OCI-LY7 (cell line): ENCODE measurements at regions of chr10 and their contacts with region 1.

Region 1: DNA sequence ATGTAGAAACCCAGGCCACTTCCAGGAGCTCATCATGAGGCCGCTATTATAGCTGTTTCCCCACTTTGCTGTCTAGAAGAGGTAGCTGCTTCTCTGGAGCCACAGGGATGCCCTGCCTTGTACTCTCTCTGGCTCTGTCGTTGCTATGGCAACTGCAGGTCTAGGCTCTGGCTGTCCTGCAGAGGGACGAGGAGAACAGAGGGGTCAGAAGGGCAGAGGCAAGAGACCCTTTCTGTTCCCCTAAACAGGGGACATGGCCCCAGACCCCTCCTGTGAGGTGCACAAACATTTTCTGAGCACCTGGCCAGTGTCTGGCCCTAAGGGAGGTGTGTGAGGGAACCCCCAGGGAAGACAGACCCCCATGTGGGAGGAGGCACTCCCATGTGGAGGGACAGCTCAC is 31.4 kb downstream of the ITPRIP start:
- DNase-seq: no peak
- H3K4me3 ChIP-seq: no peak overlapping the region
- H3K27ac ChIP-seq: no peak overlapping the region
- H3K4me1 ChIP-seq: peaks cover 6% of the 10 kb centered on the region
- CTCF ChIP-seq: no peak

Region 2: GRCh38 chr10:103918053-103918846 is 388.6 kb before region 1 on chr10 and contains the start of gene STN1:
- CTCF ChIA-PET with region 1: no interaction called
- POLR2A ChIA-PET with region 1: no interaction called
- intact Hi-C with region 1: no loop called
- DNase-seq: peak; percentile 97
- H3K4me3 ChIP-seq: peak within 1 kb of the TSS; percentile 75
- H3K27ac ChIP-seq: peak within 1 kb of the TSS; percentile 55
- H3K4me1 ChIP-seq: peaks cover 28% of the 10 kb centered on the region
- CTCF ChIP-seq: peak; percentile 54
- total RNA-seq, gene STN1: 19.5 and 20.9 TPM in 2 replicates

Region 3: GRCh38 chr10:104291439-104291951 is 15.4 kb before region 1 on chr10:
- CTCF ChIA-PET with region 1: interaction called, 11 read pairs
- POLR2A ChIA-PET with region 1: interaction called, 16 read pairs
- intact Hi-C with region 1: no loop called
- DNase-seq: peak; percentile 91
- H3K4me3 ChIP-seq: no peak overlapping the region
- H3K27ac ChIP-seq: no peak overlapping the region
- H3K4me1 ChIP-seq: no peaks in the 10 kb centered on the region
- CTCF ChIP-seq: peak; percentile 100

Region 4: GRCh38 chr10:104322416-104322782 is 15.5 kb after region 1 on chr10:
- CTCF ChIA-PET with region 1: interaction called, 4 read pairs
- POLR2A ChIA-PET with region 1: interaction called, 13 read pairs
- intact Hi-C with region 1: no loop called
- DNase-seq: peak; percentile 77
- H3K4me3 ChIP-seq: peak overlapping the region; percentile 19
- H3K27ac ChIP-seq: peak overlapping the region; percentile 70
- H3K4me1 ChIP-seq: peaks cover 73% of the 10 kb centered on the region
- CTCF ChIP-seq: no peak